ENCODE measurements at regions of chr14 and their contacts with region 1.

Region 1: GRCh38 chr14:24431569-24432258 is 2.0 kb downstream of the KHNYN start:
- DNase-seq: peak; percentile 77 to 94 (median 90)
- ATAC-seq: peak; percentile 52
- H3K4me3 ChIP-seq: peak overlapping the region in 1 of 2 experiments; percentile 71
- H3K4me3 Mint-ChIP-seq: peak overlapping the region; percentile 93
- H3K27ac ChIP-seq: peak overlapping the region; percentile 31 to 90
- H3K27ac Mint-ChIP-seq: peak overlapping the region; percentile 98
- H3K4me1 ChIP-seq: peaks cover 47% of the 10 kb centered on the region
- H3K4me1 Mint-ChIP-seq: peaks cover 45% of the 10 kb centered on the region
- H3K27me3 ChIP-seq: no peaks in the 10 kb centered on the region
- H3K27me3 Mint-ChIP-seq: no peaks in the 10 kb centered on the region
- CTCF ChIP-seq: peak; percentile 83

Region 2: GRCh38 chr14:24271134-24271833 is 160.4 kb before region 1 on chr14 and contains the start of gene RABGGTA:
- CTCF ChIA-PET with region 1: interaction called, 13 read pairs
- POLR2A ChIA-PET with region 1: interaction called, 8 read pairs
- intact Hi-C with region 1: loop called in 1 of 2 experiments (anchors 1 kb)
- DNase-seq: peak; percentile 85 to 99 (median 91)
- ATAC-seq: peak; percentile 84
- H3K4me3 ChIP-seq: peak within 1 kb of the TSS; percentile 81 to 90
- H3K4me3 Mint-ChIP-seq: peak within 1 kb of the TSS; percentile 91
- H3K27ac ChIP-seq: peak within 1 kb of the TSS; percentile 93 to 97
- H3K27ac Mint-ChIP-seq: peak within 1 kb of the TSS; percentile 98
- H3K4me1 ChIP-seq: peaks cover 31% of the 10 kb centered on the region
- H3K4me1 Mint-ChIP-seq: peaks cover 36% of the 10 kb centered on the region
- H3K27me3 ChIP-seq: no peaks in the 10 kb centered on the region
- H3K27me3 Mint-ChIP-seq: no peaks in the 10 kb centered on the region
- CTCF ChIP-seq: peak; percentile 50
- total RNA-seq, gene RABGGTA: 59.1 to 65.9 TPM

Region 3: DNA sequence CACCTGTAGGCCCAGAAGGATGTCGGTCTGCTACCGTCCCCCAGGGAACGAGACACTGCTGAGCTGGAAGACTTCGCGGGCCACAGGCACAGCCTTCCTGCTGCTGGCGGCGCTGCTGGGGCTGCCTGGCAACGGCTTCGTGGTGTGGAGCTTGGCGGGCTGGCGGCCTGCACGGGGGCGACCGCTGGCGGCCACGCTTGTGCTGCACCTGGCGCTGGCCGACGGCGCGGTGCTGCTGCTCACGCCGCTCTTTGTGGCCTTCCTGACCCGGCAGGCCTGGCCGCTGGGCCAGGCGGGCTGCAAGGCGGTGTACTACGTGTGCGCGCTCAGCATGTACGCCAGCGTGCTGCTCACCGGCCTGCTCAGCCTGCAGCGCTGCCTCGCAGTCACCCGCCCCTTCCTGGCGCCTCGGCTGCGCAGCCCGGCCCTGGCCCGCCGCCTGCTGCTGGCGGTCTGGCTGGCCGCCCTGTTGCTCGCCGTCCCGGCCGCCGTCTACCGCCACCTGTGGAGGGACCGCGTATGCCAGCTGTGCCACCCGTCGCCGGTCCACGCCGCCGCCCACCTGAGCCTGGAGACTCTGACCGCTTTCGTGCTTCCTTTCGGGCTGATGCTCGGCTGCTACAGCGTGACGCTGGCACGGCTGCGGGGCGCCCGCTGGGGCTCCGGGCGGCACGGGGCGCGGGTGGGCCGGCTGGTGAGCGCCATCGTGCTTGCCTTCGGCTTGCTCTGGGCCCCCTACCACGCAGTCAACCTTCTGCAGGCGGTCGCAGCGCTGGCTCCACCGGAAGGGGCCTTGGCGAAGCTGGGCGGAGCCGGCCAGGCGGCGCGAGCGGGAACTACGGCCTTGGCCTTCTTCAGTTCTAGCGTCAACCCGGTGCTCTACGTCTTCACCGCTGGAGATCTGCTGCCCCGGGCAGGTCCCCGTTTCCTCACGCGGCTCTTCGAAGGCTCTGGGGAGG is 120.8 kb before region 1 on chr14 and contains the start of gene LTB4R:
- CTCF ChIA-PET with region 1: interaction called, 37 read pairs
- POLR2A ChIA-PET with region 1: interaction called, 12 read pairs
- intact Hi-C with region 1: no loop called
- DNase-seq: peak; percentile 41 to 89 (median 68)
- ATAC-seq: peak; percentile 80
- H3K4me3 ChIP-seq: peak within 1 kb of the TSS; percentile 52 to 57
- H3K4me3 Mint-ChIP-seq: peak within 1 kb of the TSS; percentile 75
- H3K27ac ChIP-seq: peak within 1 kb of the TSS; percentile 63 to 78
- H3K27ac Mint-ChIP-seq: peak within 1 kb of the TSS; percentile 90
- H3K4me1 ChIP-seq: peaks cover 62% of the 10 kb centered on the region
- H3K4me1 Mint-ChIP-seq: peaks cover 72% of the 10 kb centered on the region
- H3K27me3 ChIP-seq: no peaks in the 10 kb centered on the region
- H3K27me3 Mint-ChIP-seq: no peaks in the 10 kb centered on the region
- CTCF ChIP-seq: no peak
- total RNA-seq, gene LTB4R: 15.4 to 16.7 TPM

Region 4: DNA sequence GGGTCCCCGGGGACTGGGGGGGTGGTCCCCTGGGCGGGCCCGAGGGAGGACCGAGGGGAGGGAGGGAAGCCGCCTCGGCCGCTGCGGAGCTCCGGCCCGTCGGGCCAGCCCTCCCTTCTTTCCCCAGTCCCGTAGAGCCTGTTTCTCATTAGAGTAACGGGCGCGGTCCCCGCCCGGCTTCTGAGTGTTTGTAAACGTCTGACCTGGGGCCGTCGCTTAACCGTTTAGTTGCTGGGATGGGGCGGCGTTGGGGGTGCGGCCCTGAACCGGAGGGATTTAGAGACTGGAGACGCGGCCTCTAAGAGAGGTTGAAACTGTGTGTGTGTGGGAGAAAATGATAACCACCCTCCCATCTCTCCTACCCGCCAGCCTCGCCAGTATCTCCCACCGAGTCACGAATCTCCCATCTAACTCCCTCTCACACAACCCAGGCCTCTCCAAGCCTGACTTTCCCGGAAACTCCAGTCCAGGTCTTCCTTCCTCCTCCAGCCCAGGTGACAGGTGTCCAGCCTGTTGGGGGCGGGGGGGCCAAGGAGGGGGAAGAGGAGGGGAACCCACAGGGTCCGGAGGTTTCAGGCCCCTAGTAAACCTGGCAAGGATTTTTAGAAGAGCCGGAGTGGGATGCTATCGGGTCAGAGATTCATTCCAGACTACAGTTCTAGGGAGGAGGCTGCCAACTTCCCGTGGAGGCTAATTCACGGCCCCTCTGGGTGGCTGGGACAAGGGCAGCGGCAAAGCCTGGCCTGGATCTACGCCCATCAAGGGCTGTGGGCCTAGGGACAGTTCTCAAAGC is 64.8 kb before region 1 on chr14:
- CTCF ChIA-PET with region 1: interaction called, 35 read pairs
- POLR2A ChIA-PET with region 1: interaction called, 4 read pairs
- intact Hi-C with region 1: loop called (anchors 1 to 2 kb)
- DNase-seq: peak in 6 of 9 experiments; percentile 21 to 53 (median 34)
- ATAC-seq: peak; percentile 32
- H3K4me3 ChIP-seq: peak overlapping the region; percentile 22 to 41
- H3K4me3 Mint-ChIP-seq: peak overlapping the region; percentile 71
- H3K27ac ChIP-seq: no peak overlapping the region
- H3K27ac Mint-ChIP-seq: no peak overlapping the region
- H3K4me1 ChIP-seq: peaks cover 35% of the 10 kb centered on the region
- H3K4me1 Mint-ChIP-seq: peaks cover 30% of the 10 kb centered on the region
- H3K27me3 ChIP-seq: peaks cover 40 to 43% of the 10 kb centered on the region in 2 experiments
- H3K27me3 Mint-ChIP-seq: peaks cover 45% of the 10 kb centered on the region
- CTCF ChIP-seq: no peak

Region 5: GRCh38 chr14:24418492-24418873 is 13.2 kb before region 1 on chr14:
- CTCF ChIA-PET with region 1: interaction called, 19 read pairs
- POLR2A ChIA-PET with region 1: interaction called, 5 read pairs
- intact Hi-C with region 1: no loop called
- DNase-seq: peak in 1 of 9 experiments; percentile 1
- ATAC-seq: no peak
- H3K4me3 ChIP-seq: no peak overlapping the region
- H3K4me3 Mint-ChIP-seq: no peak overlapping the region
- H3K27ac ChIP-seq: no peak overlapping the region
- H3K27ac Mint-ChIP-seq: no peak overlapping the region
- H3K4me1 ChIP-seq: no peaks in the 10 kb centered on the region
- H3K4me1 Mint-ChIP-seq: no peaks in the 10 kb centered on the region
- H3K27me3 ChIP-seq: peaks cover 0 to 4% of the 10 kb centered on the region in 2 experiments
- H3K27me3 Mint-ChIP-seq: no peaks in the 10 kb centered on the region
- CTCF ChIP-seq: no peak

Region 6: DNA sequence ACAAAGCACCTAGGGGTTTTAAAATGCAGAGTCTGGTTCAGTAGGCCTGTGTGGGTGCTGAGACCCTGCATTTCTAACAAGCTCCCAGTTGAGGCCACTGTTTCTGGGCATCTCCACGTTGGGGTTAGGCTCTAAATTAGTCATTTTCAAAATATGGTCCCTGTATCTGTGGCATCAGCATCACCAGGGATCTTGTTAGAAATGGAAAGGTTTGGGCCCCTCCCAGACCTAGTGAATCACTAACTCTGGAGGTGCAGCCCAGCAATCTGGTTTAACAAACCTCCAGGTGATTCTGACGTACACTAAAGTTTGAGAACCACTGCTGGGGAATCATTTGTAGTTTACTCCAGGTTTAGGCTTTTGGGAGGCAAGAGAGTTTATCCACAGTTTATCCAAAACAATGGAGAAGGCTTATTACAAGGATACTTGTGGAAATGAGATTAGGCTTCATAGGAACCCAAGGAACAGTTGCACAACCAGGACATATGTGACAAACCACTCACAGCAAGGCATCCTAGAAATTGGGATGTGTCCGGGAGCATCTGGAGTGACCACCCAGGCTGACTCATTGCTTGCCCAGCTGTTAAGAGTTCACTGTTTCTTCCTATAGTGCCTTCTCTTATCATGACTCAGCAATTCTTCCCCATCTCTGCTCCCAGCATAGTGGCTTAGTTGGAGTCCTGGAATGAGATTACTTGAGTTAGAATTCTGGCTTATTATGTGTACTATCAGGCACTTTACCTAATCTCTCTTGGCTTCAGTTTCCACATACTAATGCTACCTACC is 689.8 kb after region 1 on chr14:
- CTCF ChIA-PET with region 1: no interaction called
- POLR2A ChIA-PET with region 1: no interaction called
- intact Hi-C with region 1: no loop called
- DNase-seq: no peak
- ATAC-seq: no peak
- H3K4me3 ChIP-seq: no peak overlapping the region
- H3K4me3 Mint-ChIP-seq: no peak overlapping the region
- H3K27ac ChIP-seq: no peak overlapping the region
- H3K27ac Mint-ChIP-seq: no peak overlapping the region
- H3K4me1 ChIP-seq: no peaks in the 10 kb centered on the region
- H3K4me1 Mint-ChIP-seq: no peaks in the 10 kb centered on the region
- H3K27me3 ChIP-seq: no peaks in the 10 kb centered on the region
- H3K27me3 Mint-ChIP-seq: peaks cover 7% of the 10 kb centered on the region
- CTCF ChIP-seq: no peak